ENCODE measurements at regions of chr1 and their contacts with region 1.

Region 1: GRCh38 chr1:58783993-58784757 is at the start of gene JUN:
- DNase-seq: peak; percentile 99
- total RNA-seq, gene JUN: 91.7 TPM

Region 2: DNA sequence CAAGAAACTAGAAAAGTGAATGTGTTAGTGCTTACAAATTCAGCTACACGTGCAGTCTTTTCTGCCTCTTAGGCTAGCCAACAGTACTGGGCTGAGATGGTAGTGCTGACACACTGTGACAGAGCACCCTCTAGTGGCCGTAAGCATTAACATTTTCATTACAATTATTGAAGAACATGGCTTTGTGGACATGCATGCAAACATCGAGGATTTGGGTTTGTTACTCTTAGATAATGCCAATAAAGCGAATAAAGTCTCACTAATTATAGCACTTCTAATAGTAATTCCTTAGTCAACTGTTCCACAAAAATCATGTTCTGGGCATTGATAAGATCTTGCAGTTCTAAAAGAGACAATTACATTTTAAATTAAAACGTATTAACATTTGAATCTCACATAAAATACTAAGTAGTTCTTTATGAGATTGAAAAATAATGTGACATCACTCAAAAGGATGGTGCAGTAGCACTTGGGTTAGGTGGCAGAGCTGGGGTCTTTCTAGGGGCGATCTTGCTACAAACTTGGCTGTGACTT is 131.5 kb before region 1 on chr1:
- intact Hi-C with region 1: no loop called
- DNase-seq: no peak

Region 3: GRCh38 chr1:58903514-58904298 is 119.5 kb after region 1 on chr1:
- intact Hi-C with region 1: loop called (anchors 1 kb)
- DNase-seq: peak; percentile 95

Region 4: DNA sequence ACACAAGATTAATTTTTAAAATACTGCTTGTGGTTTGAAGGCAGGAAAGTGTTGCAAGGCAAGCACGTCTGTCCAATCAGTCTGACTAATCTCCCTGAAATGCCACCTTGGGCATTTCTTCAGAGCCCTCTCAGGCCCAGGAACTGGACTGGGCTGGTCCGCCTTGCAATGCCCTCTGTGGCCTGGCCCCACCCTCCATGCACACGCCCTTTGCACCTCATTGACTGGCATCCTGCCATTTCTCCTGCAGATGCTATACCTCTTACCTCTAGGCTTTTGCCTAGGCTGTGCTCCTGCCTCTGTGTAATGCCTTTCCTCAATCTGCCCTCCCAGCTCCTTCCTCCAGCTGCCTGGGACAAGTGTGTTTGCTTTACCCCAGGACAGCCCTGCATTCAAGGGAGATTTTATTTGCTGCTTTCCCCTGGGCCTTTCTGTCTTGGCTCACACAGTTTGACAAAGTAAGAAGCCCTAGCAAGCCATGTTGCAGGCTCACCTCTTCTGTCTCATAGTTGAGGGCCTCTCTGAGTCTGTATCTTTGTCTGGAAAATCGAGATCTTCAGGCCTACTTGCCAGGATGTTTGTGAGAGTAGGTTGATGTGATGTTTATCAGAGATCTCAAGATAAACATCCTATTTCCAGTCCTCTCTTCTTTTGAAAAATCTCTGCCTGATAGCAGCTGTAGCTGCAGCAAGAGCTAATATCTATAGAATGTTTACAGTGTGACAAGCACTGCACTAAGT is 148.9 kb after region 1 on chr1:
- intact Hi-C with region 1: no loop called
- DNase-seq: no peak

Region 5: DNA sequence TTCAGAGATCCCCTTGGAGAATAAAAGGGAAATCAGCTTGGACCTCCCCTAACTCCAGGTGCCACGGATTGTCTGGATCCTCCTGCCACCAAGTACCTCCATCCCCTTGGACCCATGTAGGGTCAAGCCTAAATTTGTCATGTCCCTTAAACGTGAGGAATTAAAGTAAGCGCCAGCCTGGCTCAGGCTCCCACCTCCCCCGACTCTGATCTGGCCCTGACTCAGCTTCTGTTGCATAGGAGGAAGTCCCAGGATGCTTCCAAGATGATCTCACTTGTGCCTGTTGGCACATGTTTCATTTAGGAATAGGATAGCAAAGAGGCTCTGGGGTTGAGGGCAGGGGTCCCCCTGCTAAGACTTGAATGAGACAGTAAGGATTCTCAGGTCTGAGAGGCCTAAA is 231.5 kb after region 1 on chr1:
- intact Hi-C with region 1: loop called (anchors 2 kb)
- DNase-seq: no peak

Region 6: GRCh38 chr1:59143133-59143487 is 358.9 kb after region 1 on chr1:
- intact Hi-C with region 1: loop called (anchors 2 kb)
- DNase-seq: no peak

Region 7: GRCh38 chr1:59393211-59394180 is 609.3 kb after region 1 on chr1:
- intact Hi-C with region 1: loop called (anchors 2 kb)
- DNase-seq: no peak

Region 8: DNA sequence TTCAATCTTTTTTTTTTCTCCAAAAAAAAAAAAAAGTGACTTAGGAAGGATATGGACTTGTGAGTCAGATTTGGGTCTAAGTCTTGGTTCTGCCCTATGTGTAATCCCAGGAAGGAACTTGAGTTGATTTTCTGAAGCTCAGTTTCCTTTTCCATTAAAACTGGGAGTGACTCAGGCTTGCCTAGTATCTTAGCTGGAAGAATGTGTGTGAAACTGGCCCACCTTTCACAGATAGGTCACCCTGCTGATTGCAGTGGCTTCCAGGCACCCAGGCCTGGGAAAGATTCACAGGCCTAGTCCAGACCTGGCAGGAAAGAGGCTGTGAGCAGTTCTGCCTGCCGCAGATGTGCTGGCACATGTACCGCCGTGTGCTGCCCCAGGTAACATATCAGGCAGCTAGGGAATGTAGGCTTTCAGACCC is 812.3 kb after region 1 on chr1:
- intact Hi-C with region 1: loop called (anchors 10 kb)
- DNase-seq: no peak

Region 9: GRCh38 chr1:59730759-59731478 is 946.7 kb after region 1 on chr1:
- intact Hi-C with region 1: loop called (anchors 5 kb)
- DNase-seq: peak; percentile 87